Activated CD4-positive, alpha-beta memory T cell treated with anti-CD3 and anti-CD28 coated beads for 36 hours (primary cell): ENCODE measurements at regions of chrX and their contacts with region 1.

Region 1: DNA sequence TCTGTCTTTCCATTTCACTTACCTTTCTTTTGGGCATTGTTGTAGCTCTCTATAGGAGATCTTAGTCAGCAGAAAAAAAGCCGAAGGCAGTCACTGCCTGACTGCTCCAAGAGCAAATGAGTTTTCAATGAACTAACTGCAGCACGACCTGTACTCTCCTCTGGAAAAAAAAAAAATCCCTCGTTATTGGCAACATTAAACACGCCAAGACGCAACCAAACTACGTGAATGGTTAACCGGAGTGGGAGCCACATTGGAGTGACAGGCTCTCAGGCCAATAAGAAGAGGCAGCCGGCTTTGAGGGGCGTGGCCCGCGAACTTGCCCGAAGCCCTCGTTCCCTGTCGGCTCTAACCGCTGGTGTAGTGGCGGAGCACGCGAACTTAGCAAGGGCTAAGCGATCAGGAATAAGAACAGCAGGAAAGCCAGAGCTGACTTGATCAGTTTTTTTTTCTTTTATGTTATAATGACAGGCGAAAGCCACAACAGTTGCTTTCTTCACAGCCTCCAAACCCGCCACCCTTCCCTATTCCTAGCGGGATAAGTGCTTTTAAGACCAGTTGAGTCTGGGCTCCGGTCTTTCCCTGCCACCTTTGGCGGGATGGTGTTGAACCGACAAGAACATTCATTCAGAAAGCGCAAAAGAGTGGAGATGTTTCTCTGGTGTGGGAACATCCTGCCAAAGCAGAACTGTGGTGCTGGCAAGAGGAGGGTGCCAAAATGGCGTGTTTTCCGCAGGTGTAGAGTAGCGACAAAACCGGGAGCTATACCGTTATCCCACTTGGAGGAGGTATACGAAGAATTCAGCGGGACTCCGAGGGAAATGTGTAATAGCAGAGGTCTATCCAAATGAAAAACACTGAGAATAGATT is 80.0 kb downstream of the HMGN5 start:
- DNase-seq: peak; percentile 91
- H3K4me3 Mint-ChIP-seq: peak overlapping the region; percentile 85
- H3K27ac Mint-ChIP-seq: peak overlapping the region; percentile 83
- H3K4me1 Mint-ChIP-seq: peaks cover 6% of the 10 kb centered on the region
- H3K27me3 Mint-ChIP-seq: peaks cover 1% of the 10 kb centered on the region

Region 2: GRCh38 chrX:80667967-80668366 is 453.8 kb before region 1 on chrX:
- CTCF ChIA-PET with region 1: no interaction called
- POLR2A ChIA-PET with region 1: no interaction called
- intact Hi-C with region 1: loop called (anchors 10 kb)
- DNase-seq: peak; percentile 56
- H3K4me3 Mint-ChIP-seq: no peak overlapping the region
- H3K27ac Mint-ChIP-seq: no peak overlapping the region
- H3K4me1 Mint-ChIP-seq: peaks cover 5% of the 10 kb centered on the region
- H3K27me3 Mint-ChIP-seq: no peaks in the 10 kb centered on the region

Region 3: GRCh38 chrX:80808160-80808735 is 313.5 kb before region 1 on chrX:
- CTCF ChIA-PET with region 1: no interaction called
- POLR2A ChIA-PET with region 1: interaction called, 3 read pairs
- intact Hi-C with region 1: loop called (anchors 1 kb)
- DNase-seq: peak; percentile 85
- H3K4me3 Mint-ChIP-seq: peak overlapping the region; percentile 86
- H3K27ac Mint-ChIP-seq: peak overlapping the region; percentile 97
- H3K4me1 Mint-ChIP-seq: peaks cover 17% of the 10 kb centered on the region
- H3K27me3 Mint-ChIP-seq: peaks cover 1% of the 10 kb centered on the region

Region 4: DNA sequence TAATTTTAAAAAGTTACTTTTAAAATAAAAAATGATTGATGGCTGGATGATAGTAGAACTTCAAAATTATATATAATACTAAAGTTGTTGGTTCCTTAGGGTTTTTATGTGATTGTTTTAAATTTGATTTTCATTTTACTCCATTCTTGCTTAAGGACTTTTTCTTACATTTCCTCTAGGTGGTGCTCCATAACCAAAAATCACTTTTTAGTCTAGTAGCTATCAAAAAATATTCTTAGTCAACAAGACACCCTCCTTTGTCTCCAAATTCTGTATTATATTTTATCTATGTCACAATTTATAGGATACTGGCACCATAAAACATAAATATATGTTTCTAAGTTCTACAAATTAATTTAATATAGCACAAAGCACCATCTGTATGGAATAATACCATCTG is 244.9 kb before region 1 on chrX:
- CTCF ChIA-PET with region 1: no interaction called
- POLR2A ChIA-PET with region 1: no interaction called
- intact Hi-C with region 1: loop called (anchors 2 kb)
- DNase-seq: no peak
- H3K4me3 Mint-ChIP-seq: no peak overlapping the region
- H3K27ac Mint-ChIP-seq: no peak overlapping the region
- H3K4me1 Mint-ChIP-seq: no peaks in the 10 kb centered on the region
- H3K27me3 Mint-ChIP-seq: no peaks in the 10 kb centered on the region

Region 5: GRCh38 chrX:81201671-81202455 is 80.1 kb after region 1 on chrX and contains the starts of genes HMGN5 and SH3BGRL:
- CTCF ChIA-PET with region 1: interaction called, 7 read pairs
- POLR2A ChIA-PET with region 1: no interaction called
- intact Hi-C with region 1: loop called (anchors 1 kb)
- DNase-seq: peak; percentile 78
- H3K4me3 Mint-ChIP-seq: peak within 1 kb of the TSS; percentile 95
- H3K27ac Mint-ChIP-seq: peak within 1 kb of the TSS; percentile 92
- H3K4me1 Mint-ChIP-seq: peaks cover 28% of the 10 kb centered on the region
- H3K27me3 Mint-ChIP-seq: no peaks in the 10 kb centered on the region
- total RNA-seq, gene HMGN5: 5.4 to 6.1 TPM
- total RNA-seq, gene SH3BGRL: 39.1 to 41.9 TPM